AG04450 (cell line): ENCODE measurements at regions of chr2 and their contacts with region 1.

Region 1: DNA sequence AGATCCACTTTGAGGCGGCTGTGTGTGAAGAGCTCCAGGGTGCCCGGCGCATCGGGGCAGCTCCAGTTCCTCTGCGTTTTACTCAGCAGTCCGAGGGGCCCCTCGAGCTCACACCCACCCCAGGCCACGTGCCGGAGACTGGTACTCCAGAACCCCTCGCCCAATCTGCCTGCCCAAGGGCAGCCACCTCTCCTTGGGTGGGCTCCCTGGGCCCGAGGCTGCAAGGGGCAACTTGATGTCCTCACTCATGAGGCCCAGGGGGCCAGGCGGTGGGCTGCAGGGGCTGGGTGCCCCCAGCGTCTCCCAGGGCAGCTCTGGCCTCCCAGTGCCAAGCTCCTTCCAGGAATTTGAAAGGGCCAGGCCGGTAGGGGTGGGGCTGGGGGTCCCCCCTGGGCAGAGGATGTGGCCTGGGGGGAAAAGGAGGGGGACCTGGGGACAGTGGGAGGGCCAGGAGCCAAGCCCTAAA is 16.7 kb downstream of the RAMP1 start:
- DNase-seq: no peak
- H3K4me3 ChIP-seq: no peak overlapping the region
- H3K27ac ChIP-seq: no peak overlapping the region
- H3K27me3 ChIP-seq: no peaks in the 10 kb centered on the region
- CTCF ChIP-seq: no peak

Region 2: DNA sequence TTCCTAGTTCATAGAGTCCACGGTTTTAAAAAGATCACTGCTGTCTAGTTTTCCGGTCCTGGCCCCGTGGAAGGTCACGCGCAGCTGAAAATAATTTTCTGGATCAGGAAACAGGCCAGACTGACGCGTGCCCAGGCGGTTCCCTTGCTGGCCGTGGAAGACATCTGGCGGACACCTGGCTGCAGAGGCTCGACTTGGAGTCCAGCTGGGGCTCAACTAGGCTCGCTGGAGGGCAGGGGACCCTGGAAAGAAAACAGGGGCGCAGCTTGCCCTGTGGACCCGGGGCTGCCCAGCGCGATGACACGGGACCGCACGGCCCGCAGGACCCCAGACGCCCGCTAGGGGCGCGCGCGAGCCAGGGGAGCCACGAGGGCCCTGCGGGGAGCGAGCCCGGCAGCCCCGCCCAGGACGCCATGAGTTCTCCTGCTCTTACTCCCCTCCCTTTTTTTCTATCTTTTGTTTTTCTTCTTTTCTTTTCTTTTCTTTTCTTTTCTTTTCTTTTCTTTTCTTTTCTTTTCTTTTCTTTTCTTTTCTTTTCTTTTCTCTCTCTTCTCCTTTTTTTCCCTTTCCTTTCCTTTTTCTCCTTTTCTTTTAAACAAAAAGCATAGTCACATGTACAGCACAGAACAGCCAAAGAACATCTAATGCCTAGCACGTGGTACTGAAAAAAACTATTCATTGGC is 47.5 kb after region 1 on chr2:
- CTCF ChIA-PET with region 1: no interaction called
- POLR2A ChIA-PET with region 1: interaction called, 11 read pairs
- DNase-seq: peak; percentile 23
- H3K4me3 ChIP-seq: no peak overlapping the region
- H3K27ac ChIP-seq: no peak overlapping the region
- H3K27me3 ChIP-seq: no peaks in the 10 kb centered on the region
- CTCF ChIP-seq: peak; percentile 79

Region 3: GRCh38 chr2:238158527-238159070 is 282.5 kb after region 1 on chr2 and contains the start of gene ERFE:
- CTCF ChIA-PET with region 1: no interaction called
- POLR2A ChIA-PET with region 1: no interaction called
- DNase-seq: no peak
- H3K4me3 ChIP-seq: peak within 1 kb of the TSS; percentile 47
- H3K27ac ChIP-seq: no peak within 1 kb of the TSS
- H3K27me3 ChIP-seq: no peaks in the 10 kb centered on the region
- CTCF ChIP-seq: peak; percentile 44
- polyA plus RNA-seq, gene ERFE: 2.4 and 2.9 TPM in 2 replicates